ENCODE measurements at regions of chr7 and their contacts with region 1.

Region 1: DNA sequence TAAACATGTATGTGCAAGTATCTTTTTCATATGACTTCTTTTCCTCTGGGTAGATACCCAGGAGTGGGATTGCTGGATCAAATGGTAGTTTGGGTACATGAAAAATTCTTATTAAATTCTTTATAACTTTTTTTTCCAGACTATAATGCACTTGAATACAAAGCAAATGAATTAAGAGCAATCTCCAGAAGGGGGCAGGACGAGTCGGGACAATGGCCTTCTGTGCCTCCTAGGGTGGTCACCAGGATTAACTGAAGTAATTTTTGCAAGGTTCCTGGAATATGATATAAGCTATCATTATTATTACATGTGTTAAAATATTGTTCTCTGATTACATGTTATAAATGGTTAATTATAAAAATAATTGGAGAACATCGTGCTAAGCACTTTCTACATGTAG is 127.2 kb downstream of the PPP1R17 start:
- DNase-seq: peak; percentile 39
- ATAC-seq: peak; percentile 50
- H3K4me3 Mint-ChIP-seq: no peak overlapping the region
- H3K27ac Mint-ChIP-seq: no peak overlapping the region
- H3K4me1 Mint-ChIP-seq: no peaks in the 10 kb centered on the region
- H3K27me3 Mint-ChIP-seq: peaks cover 29% of the 10 kb centered on the region
- CTCF ChIP-seq: no peak

Region 2: DNA sequence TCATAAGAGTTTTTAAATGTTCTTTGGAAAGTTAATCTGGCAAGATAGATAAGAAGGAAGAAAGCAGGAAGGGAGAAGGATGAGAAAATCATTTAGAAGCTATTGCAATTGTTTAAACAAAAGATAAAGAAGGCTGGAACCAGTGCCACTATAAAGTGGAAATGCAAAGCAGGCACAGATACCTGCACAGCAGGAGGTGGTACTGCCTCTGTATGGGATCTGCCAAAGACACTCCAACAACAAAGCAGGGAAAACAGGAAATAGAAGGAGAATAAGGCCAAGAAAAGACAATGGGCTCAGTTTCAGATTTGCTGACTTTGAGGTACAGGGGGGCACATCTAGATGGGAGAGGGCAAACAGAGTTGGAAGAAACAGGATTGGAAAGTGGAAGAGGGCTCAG is 11.4 kb after region 1 on chr7:
- CTCF ChIA-PET with region 1: interaction called, 15 read pairs
- POLR2A ChIA-PET with region 1: no interaction called
- DNase-seq: peak; percentile 17
- ATAC-seq: peak; percentile 58
- H3K4me3 Mint-ChIP-seq: no peak overlapping the region
- H3K27ac Mint-ChIP-seq: no peak overlapping the region; the same call in 1 of the 2 replicates
- H3K4me1 Mint-ChIP-seq: peaks cover 26% of the 10 kb centered on the region
- H3K27me3 Mint-ChIP-seq: peaks cover 8% of the 10 kb centered on the region
- CTCF ChIP-seq: no peak

Region 3: DNA sequence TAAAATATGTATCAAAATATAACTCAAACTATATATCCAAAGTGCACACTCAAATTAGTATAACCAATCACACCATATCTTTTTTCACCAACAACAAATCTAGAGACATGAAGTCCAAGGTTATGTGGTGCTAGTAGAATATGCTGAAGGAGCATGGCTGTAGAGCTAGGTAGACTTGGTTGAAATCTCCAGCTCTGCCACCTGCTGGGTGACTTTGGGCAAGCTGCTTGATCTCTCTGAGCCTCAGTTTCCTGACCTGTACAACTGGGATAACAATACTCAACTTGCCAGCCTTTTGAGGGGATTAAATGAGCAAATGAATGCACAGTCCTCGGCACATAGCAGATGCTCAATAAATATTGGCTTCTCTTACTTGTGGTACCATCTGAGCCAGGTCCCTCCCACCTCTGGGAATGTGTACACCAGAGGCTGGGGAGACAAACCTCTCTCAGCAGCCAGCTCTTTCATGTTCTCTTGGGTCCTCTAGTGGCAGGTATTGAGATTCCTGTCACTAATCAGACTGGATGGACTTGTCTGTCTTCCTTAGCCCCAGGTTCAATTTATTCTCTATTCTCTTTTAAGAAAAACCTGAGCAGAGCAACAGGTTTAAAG is 350.3 kb after region 1 on chr7:
- CTCF ChIA-PET with region 1: interaction called, 17 read pairs
- POLR2A ChIA-PET with region 1: no interaction called
- DNase-seq: peak; percentile 28
- ATAC-seq: peak; percentile 96
- H3K4me3 Mint-ChIP-seq: no peak overlapping the region
- H3K27ac Mint-ChIP-seq: no peak overlapping the region
- H3K4me1 Mint-ChIP-seq: no peaks in the 10 kb centered on the region
- H3K27me3 Mint-ChIP-seq: peaks cover 23% of the 10 kb centered on the region
- CTCF ChIP-seq: peak; percentile 50

Region 4: DNA sequence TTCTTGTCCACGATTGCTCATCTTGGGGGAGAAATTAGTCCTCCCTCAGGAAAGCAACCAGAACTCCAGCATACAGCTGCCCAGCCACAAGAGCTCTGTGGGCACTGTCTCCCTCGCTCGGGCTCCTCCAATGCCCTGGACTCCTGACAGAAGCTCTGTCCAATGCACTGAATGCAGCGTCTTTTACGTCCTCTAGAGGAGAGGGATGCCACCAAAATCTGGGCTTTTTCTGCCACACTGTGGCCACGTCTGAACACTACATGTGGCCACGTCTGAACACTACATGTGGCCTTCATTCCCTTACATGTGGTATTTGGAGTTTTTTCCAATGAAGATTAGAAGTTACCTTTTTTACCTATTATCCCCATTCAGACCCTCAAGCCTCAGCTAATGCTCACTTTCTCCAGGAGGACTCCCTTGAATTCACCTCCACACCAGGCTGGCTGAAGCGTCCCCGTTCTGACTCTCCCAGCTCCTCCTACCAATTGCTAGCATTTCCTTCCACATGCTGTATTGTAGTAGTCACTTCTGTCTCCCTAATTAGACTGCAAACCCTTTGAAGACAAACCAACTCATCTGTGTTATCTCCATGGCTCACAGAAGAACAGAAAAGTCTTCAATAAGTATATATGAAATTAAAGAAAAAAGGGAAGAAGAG is 390.3 kb after region 1 on chr7:
- CTCF ChIA-PET with region 1: interaction called, 12 read pairs
- POLR2A ChIA-PET with region 1: no interaction called
- DNase-seq: peak; percentile 65
- ATAC-seq: peak; percentile 91
- H3K4me3 Mint-ChIP-seq: no peak overlapping the region
- H3K27ac Mint-ChIP-seq: no peak overlapping the region
- H3K4me1 Mint-ChIP-seq: no peaks in the 10 kb centered on the region
- H3K27me3 Mint-ChIP-seq: peaks cover 61% of the 10 kb centered on the region
- CTCF ChIP-seq: 0 out of 2 replicates have a peak, but pooled peaks have one; percentile 34